ENCODE measurements at regions of chr6 and their contacts with region 1.

Region 1: DNA sequence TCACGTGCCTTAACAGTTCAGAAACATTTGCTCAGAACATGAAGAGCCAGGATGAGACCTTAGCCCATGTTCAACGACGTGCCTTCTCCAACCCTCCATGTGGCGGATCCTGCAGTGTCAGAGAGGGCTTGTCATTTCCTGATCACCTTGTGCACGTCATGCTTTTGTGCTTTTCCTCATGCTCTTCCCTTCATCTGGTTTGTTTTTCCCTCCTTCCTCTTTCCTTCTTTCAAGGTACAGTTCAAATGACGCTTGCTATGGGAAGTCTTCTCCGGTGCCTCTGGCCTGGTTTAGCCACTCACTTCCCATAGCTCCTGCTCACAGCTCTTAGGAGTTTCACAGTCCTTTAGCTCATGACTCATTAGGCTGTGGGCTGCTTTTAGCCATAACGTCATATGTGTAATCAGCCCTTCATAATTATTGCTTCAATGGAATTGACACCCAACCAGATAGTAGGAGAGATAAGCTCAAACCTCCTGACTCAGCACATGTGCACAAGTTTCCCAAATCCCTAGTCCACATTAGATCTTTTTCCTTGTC is 102.7 kb upstream of the CNKSR3 start:
- DNase-seq: no peak
- ATAC-seq: no peak
- H3K4me3 ChIP-seq: no peak overlapping the region
- H3K27ac ChIP-seq: no peak overlapping the region
- H3K4me1 ChIP-seq: peaks cover 12% of the 10 kb centered on the region
- H3K27me3 ChIP-seq: no peaks in the 10 kb centered on the region
- CTCF ChIP-seq: no peak

Region 2: GRCh38 chr6:154474636-154475428 is 138.4 kb before region 1 on chr6:
- CTCF ChIA-PET with region 1: no interaction called
- POLR2A ChIA-PET with region 1: no interaction called
- in situ Hi-C with region 1: no loop called
- intact Hi-C with region 1: no loop called
- DNase-seq: no peak
- ATAC-seq: no peak
- H3K4me3 ChIP-seq: no peak overlapping the region
- H3K27ac ChIP-seq: no peak overlapping the region
- H3K4me1 ChIP-seq: peaks cover 20% of the 10 kb centered on the region
- H3K27me3 ChIP-seq: no peaks in the 10 kb centered on the region
- CTCF ChIP-seq: no peak

Region 3: GRCh38 chr6:154555073-154555677 is 58.0 kb before region 1 on chr6:
- CTCF ChIA-PET with region 1: no interaction called
- POLR2A ChIA-PET with region 1: interaction called, 12 read pairs
- in situ Hi-C with region 1: no loop called
- intact Hi-C with region 1: no loop called
- DNase-seq: peak; percentile 39
- ATAC-seq: peak; percentile 93
- H3K4me3 ChIP-seq: peak overlapping the region in 1 of 2 experiments; percentile 8; a peak in 1 of 4 replicates
- H3K27ac ChIP-seq: peak overlapping the region; percentile 65
- H3K4me1 ChIP-seq: peaks cover 16% of the 10 kb centered on the region
- H3K27me3 ChIP-seq: no peaks in the 10 kb centered on the region
- CTCF ChIP-seq: no peak

Region 4: DNA sequence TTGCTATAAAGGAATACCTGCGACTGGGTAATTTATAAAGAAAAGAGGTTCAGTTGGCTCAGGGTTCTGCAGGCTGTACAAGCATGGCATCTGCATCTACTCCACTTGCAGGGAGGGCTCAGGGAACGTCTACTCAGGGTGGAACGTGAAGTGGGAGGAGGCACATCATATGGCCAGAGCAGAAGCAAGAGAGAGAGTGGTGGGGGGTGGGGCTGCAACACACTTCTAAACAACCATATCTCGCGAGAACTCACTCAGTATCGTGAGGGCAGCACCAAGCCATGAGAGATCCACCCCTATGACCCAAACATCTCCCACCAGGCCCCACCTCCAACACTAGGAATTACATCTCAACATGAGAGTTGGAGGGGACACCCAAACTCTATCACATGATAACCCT is 10.2 kb after region 1 on chr6:
- CTCF ChIA-PET with region 1: no interaction called
- POLR2A ChIA-PET with region 1: no interaction called
- in situ Hi-C with region 1: no loop called
- intact Hi-C with region 1: no loop called
- DNase-seq: no peak
- ATAC-seq: no peak
- H3K4me3 ChIP-seq: no peak overlapping the region
- H3K27ac ChIP-seq: no peak overlapping the region
- H3K4me1 ChIP-seq: no peaks in the 10 kb centered on the region
- H3K27me3 ChIP-seq: no peaks in the 10 kb centered on the region
- CTCF ChIP-seq: no peak